Heart left ventricle (tissue), 16 donors: ENCODE measurements at regions of chr9 and their contacts with region 1.

Region 1: GRCh38 chr9:129320575-129321263 is 142.7 kb upstream of the IER5L start:
- DNase-seq: peak in 4 of 5 donors; percentile 72 to 77 (median 74)
- ATAC-seq: peak; percentile 70 to 86 (median 82)
- H3K4me3 ChIP-seq: peak overlapping the region in 11 of 12 donors; percentile 33 to 77 (median 55)
- H3K27ac ChIP-seq: peak overlapping the region; percentile 78 to 97 (median 92)
- H3K4me1 ChIP-seq: peaks cover 8 to 82% (median 61%) of the 10 kb centered on the region in 12 donors
- H3K27me3 ChIP-seq: no peaks in the 10 kb centered on the region
- CTCF ChIP-seq: peak in 7 of 12 donors; percentile 18 to 50 (median 27)
- POLR2A ChIP-seq: peak in 1 of 2 donors; percentile 83

Region 2: DNA sequence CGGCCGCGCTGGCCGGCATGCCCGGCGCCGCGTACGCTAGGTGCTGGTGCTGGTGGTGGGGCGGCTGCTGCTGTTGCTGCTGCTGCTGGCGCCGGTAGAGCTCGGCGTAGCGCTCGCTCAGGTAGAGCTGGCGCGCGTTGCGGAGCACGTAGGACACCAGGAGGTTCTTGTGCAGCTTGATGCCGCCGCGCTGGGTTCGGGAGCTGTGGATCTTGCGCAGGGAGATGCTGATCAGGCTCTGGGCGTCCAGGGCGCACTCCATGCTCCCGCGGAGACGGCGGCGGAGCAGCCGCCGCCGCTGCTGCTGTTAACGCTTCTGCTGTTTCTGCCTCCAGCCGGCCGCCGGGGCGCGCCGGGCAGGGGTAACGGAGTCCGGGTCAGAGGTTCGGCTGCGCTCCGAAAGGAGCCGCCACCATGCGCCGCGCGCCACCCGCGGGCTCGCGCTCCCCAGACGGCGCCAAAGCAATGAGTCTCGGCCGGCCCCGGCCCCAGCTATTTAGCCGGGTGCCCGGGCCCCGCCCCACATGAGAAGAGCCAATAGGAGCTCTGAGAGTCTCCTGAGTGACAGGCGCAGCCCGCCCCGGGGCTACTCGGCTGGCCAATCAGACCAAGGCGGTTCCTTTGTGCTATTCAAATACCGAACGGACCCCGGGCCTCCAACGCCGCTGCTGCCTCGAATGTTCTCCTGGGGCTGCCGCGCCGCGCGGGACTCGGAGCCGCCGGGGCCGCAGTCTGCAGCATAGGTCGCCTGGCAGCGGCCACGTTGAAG is 142.7 kb before region 1 on chr9 and contains the start of gene IER5L:
- intact Hi-C with region 1: loop called in 6 of 10 experiments (anchors 2 to 5 kb)
- DNase-seq: peak; percentile 94 to 98 (median 97)
- ATAC-seq: peak; percentile 85 to 90 (median 89)
- H3K4me3 ChIP-seq: peak within 1 kb of the TSS; percentile 77 to 99 (median 95)
- H3K27ac ChIP-seq: peak within 1 kb of the TSS; percentile 81 to 100 (median 99)
- H3K4me1 ChIP-seq: peaks cover 3 to 43% (median 25%) of the 10 kb centered on the region in 12 donors
- H3K27me3 ChIP-seq: no peaks in the 10 kb centered on the region
- CTCF ChIP-seq: no peak
- POLR2A ChIP-seq: peak; percentile 90 to 99
- total RNA-seq, gene IER5L: 4.1 to 18.4 (median 5.5) TPM

Region 3: GRCh38 chr9:129267141-129267540 is 53.6 kb before region 1 on chr9:
- intact Hi-C with region 1: loop called in 2 of 10 experiments (anchors 5 kb)
- DNase-seq: peak in 1 of 5 donors; percentile 16
- ATAC-seq: no peak
- H3K4me3 ChIP-seq: no peak overlapping the region
- H3K27ac ChIP-seq: no peak overlapping the region
- H3K4me1 ChIP-seq: peaks cover 0 to 19% (median 0%) of the 10 kb centered on the region in 12 donors
- H3K27me3 ChIP-seq: no peaks in the 10 kb centered on the region
- CTCF ChIP-seq: no peak
- POLR2A ChIP-seq: no peak

Region 4: GRCh38 chr9:129460323-129461261 is 139.9 kb after region 1 on chr9:
- intact Hi-C with region 1: loop called in 1 of 10 experiments (anchors 10 kb)
- DNase-seq: peak; percentile 97 to 99 (median 98)
- ATAC-seq: peak; percentile 86 to 94 (median 92)
- H3K4me3 ChIP-seq: peak overlapping the region; percentile 16 to 60 (median 51)
- H3K27ac ChIP-seq: peak overlapping the region; percentile 91 to 100 (median 98)
- H3K4me1 ChIP-seq: peaks cover 9 to 52% (median 43%) of the 10 kb centered on the region in 12 donors
- H3K27me3 ChIP-seq: no peaks in the 10 kb centered on the region
- CTCF ChIP-seq: peak in 8 of 12 donors; percentile 5 to 51 (median 28)
- POLR2A ChIP-seq: peak; percentile 39 to 79

Region 5: DNA sequence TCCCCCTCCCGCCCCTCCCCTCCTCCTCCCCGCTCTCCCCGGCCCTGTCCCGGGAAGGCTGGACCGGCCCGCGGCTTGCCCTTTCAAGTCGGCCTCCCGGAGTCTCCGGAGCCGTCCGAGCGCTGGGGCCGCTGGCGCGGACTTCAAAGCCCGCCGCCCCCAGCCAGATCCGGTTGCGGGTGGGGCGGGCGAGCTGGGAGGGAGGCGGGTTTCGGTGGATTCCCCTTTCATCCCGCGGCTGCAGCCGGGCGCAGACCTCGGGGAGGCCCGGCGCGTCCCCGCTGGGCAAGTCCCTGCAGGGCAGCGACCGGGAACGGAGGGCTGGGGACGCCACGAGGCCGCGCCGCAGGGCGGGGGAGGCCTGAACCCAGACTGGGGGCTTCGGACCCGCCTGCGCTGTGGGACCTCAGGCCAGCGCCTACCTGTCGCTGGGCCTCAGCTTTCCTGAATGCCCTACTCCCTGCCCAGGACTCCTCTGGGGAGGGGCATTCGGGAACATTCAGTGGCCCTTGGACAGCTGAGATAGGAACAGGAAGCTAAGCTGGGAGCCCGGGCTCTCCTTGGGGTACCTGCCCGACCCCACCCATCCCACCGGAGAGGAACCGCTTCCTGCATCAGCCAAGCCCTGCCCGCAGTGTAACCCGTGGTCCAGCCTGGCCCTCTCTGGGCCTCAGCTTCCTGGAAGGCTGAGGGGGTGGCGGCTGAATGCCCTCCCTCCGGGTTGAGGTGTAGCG is 276.8 kb after region 1 on chr9:
- intact Hi-C with region 1: loop called in 2 of 10 experiments (anchors 5 to 10 kb)
- DNase-seq: peak; percentile 67 to 83 (median 72)
- ATAC-seq: peak; percentile 6 to 72 (median 68)
- H3K4me3 ChIP-seq: peak overlapping the region in 11 of 12 donors; percentile 30 to 62 (median 54)
- H3K27ac ChIP-seq: peak overlapping the region; percentile 35 to 93 (median 87)
- H3K4me1 ChIP-seq: peaks cover 0 to 37% (median 19%) of the 10 kb centered on the region in 12 donors
- H3K27me3 ChIP-seq: peaks cover 0 to 21% (median 0%) of the 10 kb centered on the region in 9 donors
- CTCF ChIP-seq: no peak
- POLR2A ChIP-seq: no peak

Region 6: GRCh38 chr9:129602598-129603415 is 282.1 kb after region 1 on chr9:
- intact Hi-C with region 1: loop called in 3 of 10 experiments (anchors 1 to 10 kb)
- DNase-seq: no peak
- ATAC-seq: no peak
- H3K4me3 ChIP-seq: no peak overlapping the region
- H3K27ac ChIP-seq: peak overlapping the region in 1 of 12 donors; percentile 17
- H3K4me1 ChIP-seq: peaks cover 0 to 27% (median 16%) of the 10 kb centered on the region in 12 donors
- H3K27me3 ChIP-seq: peaks cover 0 to 14% (median 0%) of the 10 kb centered on the region in 9 donors
- CTCF ChIP-seq: no peak
- POLR2A ChIP-seq: no peak